CD4-positive, alpha-beta T cell (primary cell): ENCODE measurements at regions of chr9 and their contacts with region 1.

Region 1: GRCh38 chr9:126471084-126471624 is 142.6 kb upstream of the LMX1B start:
- DNase-seq: peak; percentile 53 to 92 (median 62)
- ATAC-seq: peak; percentile 73
- H3K4me3 ChIP-seq: peak overlapping the region; percentile 31
- H3K4me3 Mint-ChIP-seq: peak overlapping the region; percentile 81
- H3K27ac ChIP-seq: peak overlapping the region; percentile 42 to 56
- H3K27ac Mint-ChIP-seq: peak overlapping the region; percentile 95
- H3K4me1 ChIP-seq: peaks cover 82% of the 10 kb centered on the region
- H3K4me1 Mint-ChIP-seq: peaks cover 80% of the 10 kb centered on the region
- H3K27me3 ChIP-seq: no peaks in the 10 kb centered on the region
- H3K27me3 Mint-ChIP-seq: no peaks in the 10 kb centered on the region
- CTCF ChIP-seq: no peak

Region 2: DNA sequence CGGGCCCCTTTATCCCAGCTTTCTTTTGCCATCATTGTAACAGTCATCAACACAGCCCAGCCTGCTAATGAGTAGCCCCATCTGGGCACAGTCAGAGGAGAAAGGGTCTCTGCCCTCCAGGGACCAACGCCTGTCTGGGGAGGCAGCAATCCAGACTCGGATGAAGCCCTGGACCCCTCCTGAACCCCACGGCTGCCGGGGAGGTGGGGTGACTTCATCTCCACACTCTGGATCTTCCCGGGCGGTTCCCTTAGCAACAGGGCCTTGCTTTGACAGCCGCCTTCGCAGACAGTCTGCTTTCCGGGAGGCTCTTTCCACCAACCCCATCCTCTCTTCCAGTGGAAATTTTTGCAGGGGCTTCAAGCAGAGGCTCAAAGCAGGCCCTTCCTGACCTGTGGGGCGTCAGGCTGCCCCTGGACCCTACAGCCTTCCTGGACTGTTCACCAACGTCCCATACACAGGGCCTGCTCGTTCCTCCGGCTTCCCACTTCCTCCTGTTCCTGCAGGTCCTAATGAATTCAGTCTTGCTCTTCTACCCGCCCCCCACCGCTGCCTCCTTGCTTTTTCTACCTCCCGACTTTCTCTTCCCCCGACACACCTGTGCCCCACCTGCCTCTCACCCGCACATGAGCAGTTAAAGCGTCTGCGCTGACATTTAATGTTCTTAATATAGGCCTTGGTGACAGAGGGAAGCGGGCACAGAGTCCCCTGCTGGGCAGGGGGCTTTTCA is 306.2 kb before region 1 on chr9:
- CTCF ChIA-PET with region 1: no interaction called
- POLR2A ChIA-PET with region 1: no interaction called
- intact Hi-C with region 1: no loop called
- DNase-seq: no peak
- ATAC-seq: no peak
- H3K4me3 ChIP-seq: no peak overlapping the region
- H3K4me3 Mint-ChIP-seq: no peak overlapping the region
- H3K27ac ChIP-seq: no peak overlapping the region
- H3K27ac Mint-ChIP-seq: no peak overlapping the region
- H3K4me1 ChIP-seq: no peaks in the 10 kb centered on the region
- H3K4me1 Mint-ChIP-seq: no peaks in the 10 kb centered on the region
- H3K27me3 ChIP-seq: peaks cover 3% of the 10 kb centered on the region in 2 experiments
- H3K27me3 Mint-ChIP-seq: peaks cover 42% of the 10 kb centered on the region
- CTCF ChIP-seq: no peak

Region 3: DNA sequence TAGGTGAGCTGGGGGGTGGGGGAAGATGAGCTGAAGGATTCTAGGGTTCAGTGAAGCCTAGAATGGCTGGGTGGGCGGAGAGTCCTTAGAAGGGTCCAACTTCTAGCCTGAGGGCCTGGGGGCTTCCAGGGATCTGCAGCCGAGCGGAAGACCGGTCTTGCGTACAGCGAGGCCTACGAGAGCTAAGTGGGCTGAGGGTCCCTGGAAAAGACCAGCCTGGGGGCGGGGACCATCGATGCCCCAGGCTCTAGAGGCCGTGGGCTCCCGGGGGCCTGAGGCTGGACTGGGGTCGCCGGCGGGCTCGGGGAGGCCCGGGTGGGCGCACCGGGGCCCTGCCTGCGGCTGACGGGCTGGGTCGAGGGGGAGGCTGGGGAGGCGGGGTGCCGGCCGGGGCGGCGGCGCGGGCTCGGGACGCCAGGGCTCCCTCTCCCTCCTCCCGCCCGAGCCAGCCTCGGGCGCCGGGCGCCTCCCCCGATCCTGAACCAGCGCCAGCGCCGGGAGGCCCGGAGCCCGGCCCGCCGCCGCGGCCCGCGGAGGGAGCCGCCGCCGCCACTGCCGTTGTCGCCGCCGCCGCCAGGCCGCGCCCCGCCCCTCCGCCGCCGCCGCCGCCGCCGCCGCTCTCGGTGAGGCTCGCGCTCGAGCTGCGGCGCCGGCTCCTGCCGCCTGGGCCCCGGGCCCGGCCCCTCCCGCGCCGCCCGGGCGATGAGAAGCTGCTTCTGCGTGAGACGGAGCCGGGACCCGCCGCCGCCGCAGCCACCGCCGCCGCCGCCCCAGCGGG is 144.7 kb before region 1 on chr9 and contains the start of gene MVB12B:
- CTCF ChIA-PET with region 1: interaction called, 5 read pairs
- POLR2A ChIA-PET with region 1: interaction called, 9 read pairs
- intact Hi-C with region 1: loop called in 1 of 2 experiments (anchors 5 kb)
- DNase-seq: peak; percentile 17 to 86 (median 52)
- ATAC-seq: peak; percentile 82
- H3K4me3 ChIP-seq: peak within 1 kb of the TSS; percentile 62
- H3K4me3 Mint-ChIP-seq: peak within 1 kb of the TSS; percentile 92
- H3K27ac ChIP-seq: no peak within 1 kb of the TSS
- H3K27ac Mint-ChIP-seq: peak within 1 kb of the TSS; percentile 87
- H3K4me1 ChIP-seq: peaks cover 37% of the 10 kb centered on the region
- H3K4me1 Mint-ChIP-seq: peaks cover 47% of the 10 kb centered on the region
- H3K27me3 ChIP-seq: no peaks in the 10 kb centered on the region
- H3K27me3 Mint-ChIP-seq: no peaks in the 10 kb centered on the region
- CTCF ChIP-seq: no peak
- total RNA-seq, gene MVB12B: 14.3 to 15.3 TPM

Region 4: GRCh38 chr9:126411225-126411947 is 59.8 kb before region 1 on chr9:
- CTCF ChIA-PET with region 1: no interaction called
- POLR2A ChIA-PET with region 1: interaction called, 5 read pairs
- intact Hi-C with region 1: loop called in 1 of 2 experiments (anchors 1 kb)
- DNase-seq: peak in 7 of 14 experiments; percentile 7 to 78 (median 28)
- ATAC-seq: peak; percentile 90
- H3K4me3 ChIP-seq: peak overlapping the region; percentile 38
- H3K4me3 Mint-ChIP-seq: peak overlapping the region; percentile 74
- H3K27ac ChIP-seq: peak overlapping the region; percentile 32 to 59
- H3K27ac Mint-ChIP-seq: peak overlapping the region; percentile 80
- H3K4me1 ChIP-seq: peaks cover 38% of the 10 kb centered on the region
- H3K4me1 Mint-ChIP-seq: peaks cover 41% of the 10 kb centered on the region
- H3K27me3 ChIP-seq: no peaks in the 10 kb centered on the region
- H3K27me3 Mint-ChIP-seq: no peaks in the 10 kb centered on the region
- CTCF ChIP-seq: no peak

Region 5: GRCh38 chr9:126420643-126421577 is 50.2 kb before region 1 on chr9:
- CTCF ChIA-PET with region 1: no interaction called
- POLR2A ChIA-PET with region 1: interaction called, 6 read pairs
- intact Hi-C with region 1: loop called in 1 of 2 experiments (anchors 5 kb)
- DNase-seq: no peak
- ATAC-seq: no peak
- H3K4me3 ChIP-seq: no peak overlapping the region
- H3K4me3 Mint-ChIP-seq: no peak overlapping the region
- H3K27ac ChIP-seq: no peak overlapping the region
- H3K27ac Mint-ChIP-seq: no peak overlapping the region
- H3K4me1 ChIP-seq: peaks cover 14% of the 10 kb centered on the region
- H3K4me1 Mint-ChIP-seq: peaks cover 33% of the 10 kb centered on the region
- H3K27me3 ChIP-seq: no peaks in the 10 kb centered on the region
- H3K27me3 Mint-ChIP-seq: no peaks in the 10 kb centered on the region
- CTCF ChIP-seq: no peak

Region 6: DNA sequence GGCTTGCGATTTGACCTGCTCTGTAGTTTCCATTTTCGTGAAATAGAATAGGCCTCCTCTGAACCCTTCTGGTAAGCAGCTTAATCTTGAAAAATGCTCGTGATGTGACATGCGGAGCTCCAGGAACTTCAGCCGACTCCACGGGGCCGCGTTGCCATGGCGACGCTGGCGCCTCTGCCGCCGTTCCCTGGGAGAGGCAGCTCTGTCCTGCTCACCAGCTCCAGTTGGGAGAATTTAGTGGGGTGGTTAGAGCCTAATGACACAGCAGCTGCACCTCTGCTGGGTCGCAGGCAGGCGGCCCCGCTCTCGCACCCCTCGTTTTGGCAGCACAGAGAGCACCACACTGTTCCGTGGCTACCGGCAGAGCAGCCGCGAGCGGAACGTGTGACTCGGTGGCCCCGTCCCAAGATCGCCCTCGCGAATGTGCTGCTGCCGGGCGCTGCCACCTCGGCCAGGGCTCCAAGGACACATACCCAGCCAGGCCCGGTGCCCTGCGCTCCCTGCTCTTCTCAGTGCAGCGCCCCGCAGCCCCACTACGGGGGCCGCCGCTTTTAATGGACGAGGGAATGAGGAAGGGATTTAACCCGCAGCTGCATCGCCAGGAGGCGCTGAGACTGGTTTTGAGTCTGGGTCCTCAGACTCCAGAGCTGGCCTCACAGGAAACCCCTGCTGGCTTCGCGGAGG is 11.3 kb after region 1 on chr9:
- CTCF ChIA-PET with region 1: no interaction called
- POLR2A ChIA-PET with region 1: interaction called, 12 read pairs
- intact Hi-C with region 1: no loop called
- DNase-seq: no peak
- ATAC-seq: no peak
- H3K4me3 ChIP-seq: no peak overlapping the region
- H3K4me3 Mint-ChIP-seq: no peak overlapping the region
- H3K27ac ChIP-seq: no peak overlapping the region
- H3K27ac Mint-ChIP-seq: no peak overlapping the region
- H3K4me1 ChIP-seq: peaks cover 16% of the 10 kb centered on the region
- H3K4me1 Mint-ChIP-seq: peaks cover 20% of the 10 kb centered on the region
- H3K27me3 ChIP-seq: no peaks in the 10 kb centered on the region
- H3K27me3 Mint-ChIP-seq: no peaks in the 10 kb centered on the region
- CTCF ChIP-seq: no peak

Region 7: DNA sequence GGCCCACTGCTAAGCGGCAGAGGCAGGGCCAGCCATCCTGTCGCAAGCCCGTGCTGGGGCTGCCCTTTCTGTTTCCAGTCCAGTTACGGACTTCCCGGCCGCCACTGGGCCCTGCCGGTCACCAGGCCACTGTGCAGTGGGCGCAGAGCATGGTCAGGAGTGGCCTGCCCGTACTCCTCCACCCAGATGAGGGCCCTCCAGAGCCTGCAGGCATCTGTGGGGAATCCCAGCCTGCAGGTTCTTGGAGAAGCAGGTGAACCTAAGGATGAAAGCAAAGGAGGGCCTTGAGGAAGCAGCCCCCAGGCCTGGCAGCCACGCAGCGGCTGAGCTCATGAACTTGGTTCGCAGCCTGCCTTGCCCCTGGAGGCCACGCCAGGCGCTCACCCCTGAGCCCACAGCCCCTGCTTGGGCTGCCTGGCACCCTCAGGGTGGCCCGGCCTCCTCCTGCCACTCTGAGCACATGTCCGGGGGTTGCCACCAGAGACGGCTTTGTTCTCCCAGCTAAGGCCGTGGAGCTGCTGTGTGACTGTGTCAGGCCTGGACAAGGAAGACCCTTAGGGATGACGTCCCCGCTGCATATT is 35.3 kb after region 1 on chr9:
- CTCF ChIA-PET with region 1: no interaction called
- POLR2A ChIA-PET with region 1: no interaction called
- intact Hi-C with region 1: no loop called
- DNase-seq: no peak
- ATAC-seq: no peak
- H3K4me3 ChIP-seq: no peak overlapping the region
- H3K4me3 Mint-ChIP-seq: no peak overlapping the region
- H3K27ac ChIP-seq: no peak overlapping the region
- H3K27ac Mint-ChIP-seq: no peak overlapping the region
- H3K4me1 ChIP-seq: peaks cover under 1% of the 10 kb centered on the region
- H3K4me1 Mint-ChIP-seq: no peaks in the 10 kb centered on the region
- H3K27me3 ChIP-seq: peaks cover 3 to 15% of the 10 kb centered on the region in 2 experiments
- H3K27me3 Mint-ChIP-seq: peaks cover 9% of the 10 kb centered on the region
- CTCF ChIP-seq: no peak